CD4-positive, alpha-beta memory T cell (primary cell): ENCODE measurements at regions of chr18 and their contacts with region 1.

Region 1: DNA sequence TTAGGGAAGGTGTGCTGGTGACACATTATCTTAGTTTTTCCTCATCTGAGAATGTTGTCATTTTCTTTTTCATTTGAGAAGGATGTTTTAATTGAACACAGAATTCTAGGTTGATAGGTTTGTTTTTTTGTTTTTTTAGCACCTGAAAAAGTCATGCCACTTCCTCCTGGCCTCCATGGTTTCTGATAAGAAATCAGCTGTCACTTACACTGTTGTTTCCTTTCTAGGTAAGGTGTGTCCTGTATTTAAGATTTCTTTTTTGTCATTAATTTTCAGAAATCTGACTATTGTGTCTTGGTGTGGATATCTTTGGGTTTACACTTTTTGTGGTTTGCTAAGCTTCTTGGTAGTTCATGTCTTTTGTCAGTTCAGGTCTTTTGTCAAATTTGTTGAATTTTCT is 99.3 kb downstream of the ROCK1 start:
- DNase-seq: no peak
- H3K4me3 ChIP-seq: no peak overlapping the region
- H3K4me3 Mint-ChIP-seq: peak overlapping the region in 1 of 8 donors; percentile 40
- H3K27ac ChIP-seq: no peak overlapping the region
- H3K27ac Mint-ChIP-seq: peak overlapping the region in 3 of 7 donors; percentile 13 to 62 (median 57)
- H3K4me1 ChIP-seq: no peaks in the 10 kb centered on the region
- H3K4me1 Mint-ChIP-seq: peaks cover 7 to 14% (median 8%) of the 10 kb centered on the region in 4 donors
- H3K27me3 ChIP-seq: no peaks in the 10 kb centered on the region
- H3K27me3 Mint-ChIP-seq: no peaks in the 10 kb centered on the region

Region 2: DNA sequence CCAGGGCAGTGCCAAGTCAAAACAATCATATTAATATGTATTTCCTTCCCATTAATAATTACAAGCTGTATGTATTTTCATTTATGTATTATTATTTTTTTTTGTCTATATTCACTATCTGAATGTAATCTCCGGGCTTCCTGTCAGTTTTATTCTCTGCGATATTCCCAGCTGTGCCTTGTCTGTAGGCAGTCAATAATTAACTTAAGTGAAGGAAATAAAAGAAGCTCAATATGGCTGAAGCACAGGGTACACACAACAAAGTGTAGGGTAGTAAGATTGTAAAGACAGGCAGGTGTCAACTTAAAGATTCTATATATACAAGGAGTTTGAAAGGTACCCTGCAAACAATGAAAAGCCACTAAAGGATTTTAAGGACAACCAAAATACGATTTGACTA is 23.6 kb before region 1 on chr18:
- CTCF ChIA-PET with region 1: no interaction called
- POLR2A ChIA-PET with region 1: no interaction called
- intact Hi-C with region 1: no loop called
- DNase-seq: no peak
- H3K4me3 ChIP-seq: no peak overlapping the region
- H3K4me3 Mint-ChIP-seq: no peak overlapping the region
- H3K27ac ChIP-seq: no peak overlapping the region
- H3K27ac Mint-ChIP-seq: peak overlapping the region in 2 of 7 donors; percentile 11 to 53
- H3K4me1 ChIP-seq: no peaks in the 10 kb centered on the region
- H3K4me1 Mint-ChIP-seq: peaks cover 0 to 3% (median 1%) of the 10 kb centered on the region in 4 donors
- H3K27me3 ChIP-seq: no peaks in the 10 kb centered on the region
- H3K27me3 Mint-ChIP-seq: no peaks in the 10 kb centered on the region

Region 3: GRCh38 chr18:21057112-21057511 is 44.8 kb after region 1 on chr18:
- CTCF ChIA-PET with region 1: no interaction called
- POLR2A ChIA-PET with region 1: no interaction called
- intact Hi-C with region 1: loop called (anchors 5 kb)
- DNase-seq: no peak
- H3K4me3 ChIP-seq: no peak overlapping the region
- H3K4me3 Mint-ChIP-seq: no peak overlapping the region
- H3K27ac ChIP-seq: no peak overlapping the region
- H3K27ac Mint-ChIP-seq: no peak overlapping the region
- H3K4me1 ChIP-seq: peaks cover 35% of the 10 kb centered on the region
- H3K4me1 Mint-ChIP-seq: peaks cover 26 to 38% (median 34%) of the 10 kb centered on the region in 4 donors
- H3K27me3 ChIP-seq: no peaks in the 10 kb centered on the region
- H3K27me3 Mint-ChIP-seq: no peaks in the 10 kb centered on the region